HEK293 (cell line): ENCODE measurements at regions of chr19 and their contacts with region 1.

Region 1: GRCh38 chr19:48102870-48103751 is 7.5 kb downstream of the PLA2G4C start:
- H3K4me3 ChIP-seq: no peak overlapping the region
- H3K27ac ChIP-seq: no peak overlapping the region
- H3K4me1 ChIP-seq: 0 out of 2 replicates have a peak, but pooled peaks cover 4% of the 10 kb centered on the region
- CTCF ChIP-seq: peak; percentile 47

Region 2: GRCh38 chr19:48010932-48011764 is 92.0 kb before region 1 on chr19:
- CTCF ChIA-PET with region 1: interaction called, 10 read pairs
- POLR2A ChIA-PET with region 1: no interaction called
- H3K4me3 ChIP-seq: no peak overlapping the region
- H3K27ac ChIP-seq: no peak overlapping the region
- H3K4me1 ChIP-seq: no peaks in the 10 kb centered on the region
- CTCF ChIP-seq: no peak

Region 3: DNA sequence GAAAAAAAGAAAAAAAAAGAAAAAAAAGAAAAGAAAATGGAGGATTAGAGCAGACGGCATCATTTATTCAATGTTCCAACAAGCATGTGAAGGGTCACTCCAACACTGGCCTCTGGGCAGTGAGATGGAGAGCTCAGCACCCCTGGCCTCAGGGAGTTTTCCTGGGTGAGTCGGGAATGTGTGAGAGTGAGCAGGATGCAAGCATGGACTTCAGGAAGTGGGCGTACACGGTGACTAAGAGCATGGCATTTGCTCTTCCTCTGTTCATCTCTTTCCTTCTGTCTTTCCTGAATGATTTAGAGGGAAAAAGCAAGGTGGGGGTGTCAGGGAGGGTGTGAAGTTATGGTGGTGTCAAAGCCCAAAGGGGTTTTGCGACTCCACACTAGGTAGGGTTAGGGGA is 58.5 kb before region 1 on chr19:
- CTCF ChIA-PET with region 1: no interaction called
- POLR2A ChIA-PET with region 1: no interaction called
- H3K4me3 ChIP-seq: no peak overlapping the region
- H3K27ac ChIP-seq: no peak overlapping the region
- H3K4me1 ChIP-seq: no peaks in the 10 kb centered on the region
- CTCF ChIP-seq: no peak

Region 4: GRCh38 chr19:48085904-48086864 is 16.9 kb before region 1 on chr19:
- CTCF ChIA-PET with region 1: interaction called, 17 read pairs
- POLR2A ChIA-PET with region 1: no interaction called
- H3K4me3 ChIP-seq: no peak overlapping the region
- H3K27ac ChIP-seq: no peak overlapping the region
- H3K4me1 ChIP-seq: no peaks in the 10 kb centered on the region
- CTCF ChIP-seq: 0 out of 2 replicates have a peak, but pooled peaks have one; percentile 8

Region 5: DNA sequence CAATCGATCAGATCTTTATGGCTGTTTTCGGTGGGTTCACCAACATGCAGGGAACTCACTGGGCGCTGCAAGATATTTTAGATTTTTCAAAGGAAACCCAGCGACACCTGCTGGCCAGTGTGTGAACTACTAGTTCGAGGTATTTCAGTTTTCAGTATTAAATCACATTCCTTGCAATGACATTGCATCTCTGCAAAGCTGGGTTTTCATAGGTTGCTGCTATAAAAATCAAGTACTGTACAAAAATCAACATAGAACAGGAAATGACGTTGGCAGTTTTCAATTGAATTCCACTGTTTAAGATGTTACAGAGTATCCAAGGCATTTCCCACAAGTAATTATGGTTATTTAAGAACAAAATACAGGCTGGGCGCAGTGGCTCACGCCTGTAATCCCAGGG is 49.4 kb after region 1 on chr19:
- CTCF ChIA-PET with region 1: interaction called, 36 read pairs
- POLR2A ChIA-PET with region 1: no interaction called
- H3K4me3 ChIP-seq: no peak overlapping the region
- H3K27ac ChIP-seq: no peak overlapping the region
- H3K4me1 ChIP-seq: no peaks in the 10 kb centered on the region
- CTCF ChIP-seq: peak; percentile 36; the same call in 1 of the 2 replicates

Region 6: DNA sequence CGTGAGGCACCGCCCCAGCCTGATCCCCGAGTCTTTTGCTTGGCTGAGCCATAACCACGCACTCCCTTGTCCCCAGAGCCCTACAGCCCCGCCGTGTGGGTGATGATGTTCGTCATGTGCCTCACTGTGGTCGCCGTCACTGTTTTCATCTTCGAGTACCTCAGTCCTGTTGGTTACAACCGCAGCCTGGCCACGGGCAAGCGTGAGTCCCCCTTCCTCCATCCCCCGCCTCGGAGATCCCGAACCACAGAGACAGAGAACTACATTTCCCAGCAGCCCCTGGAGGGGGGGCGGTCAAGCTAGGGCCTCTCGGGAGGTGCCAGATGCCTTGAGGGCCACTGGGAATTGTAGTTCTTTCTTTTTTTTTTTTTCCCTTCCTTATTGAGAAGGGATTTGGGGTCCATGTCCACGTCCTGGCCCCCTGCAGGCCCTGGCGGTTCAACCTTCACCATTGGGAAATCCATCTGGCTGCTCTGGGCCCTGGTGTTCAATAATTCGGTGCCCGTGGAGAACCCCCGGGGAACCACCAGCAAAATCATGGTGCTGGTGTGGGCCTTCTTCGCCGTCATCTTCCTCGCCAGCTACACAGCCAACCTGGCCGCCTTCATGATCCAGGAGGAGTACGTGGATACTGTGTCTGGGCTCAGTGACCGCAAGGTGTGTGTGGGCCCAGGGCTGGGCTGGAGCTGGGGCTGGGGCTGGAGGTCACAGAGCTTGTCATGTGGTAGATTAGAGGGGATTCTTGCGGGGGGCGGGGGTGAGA is 316.2 kb after region 1 on chr19:
- CTCF ChIA-PET with region 1: no interaction called
- POLR2A ChIA-PET with region 1: no interaction called
- H3K4me3 ChIP-seq: no peak overlapping the region
- H3K27ac ChIP-seq: no peak overlapping the region
- H3K4me1 ChIP-seq: peaks cover 2% of the 10 kb centered on the region; the same call in 1 of the 2 replicates
- CTCF ChIP-seq: no peak